ENCODE measurements at regions of chr22 and their contacts with region 1.

Region 1: GRCh38 chr22:33958741-33959140 is 38.5 kb upstream of the LARGE1 start:
- DNase-seq: no peak
- H3K4me3 ChIP-seq: no peak overlapping the region
- H3K27ac ChIP-seq: no peak overlapping the region
- H3K4me1 ChIP-seq: peaks cover 0 to 4% (median 2%) of the 10 kb centered on the region in 4 donors
- H3K27me3 ChIP-seq: peaks cover 0 to 4% of the 10 kb centered on the region in 2 donors
- CTCF ChIP-seq: no peak

Region 2: GRCh38 chr22:35517769-35518530 is 1559.2 kb after region 1 on chr22:
- intact Hi-C with region 1: loop called (anchors 5 kb)
- DNase-seq: no peak
- H3K4me3 ChIP-seq: no peak overlapping the region
- H3K27ac ChIP-seq: no peak overlapping the region
- H3K4me1 ChIP-seq: no peaks in the 10 kb centered on the region
- H3K27me3 ChIP-seq: peaks cover 0 to 34% of the 10 kb centered on the region in 2 donors
- CTCF ChIP-seq: no peak

Measured in tibial artery (tissue), 4 donors.